ENCODE measurements at regions of chr9 and their contacts with region 1.

Region 1: DNA sequence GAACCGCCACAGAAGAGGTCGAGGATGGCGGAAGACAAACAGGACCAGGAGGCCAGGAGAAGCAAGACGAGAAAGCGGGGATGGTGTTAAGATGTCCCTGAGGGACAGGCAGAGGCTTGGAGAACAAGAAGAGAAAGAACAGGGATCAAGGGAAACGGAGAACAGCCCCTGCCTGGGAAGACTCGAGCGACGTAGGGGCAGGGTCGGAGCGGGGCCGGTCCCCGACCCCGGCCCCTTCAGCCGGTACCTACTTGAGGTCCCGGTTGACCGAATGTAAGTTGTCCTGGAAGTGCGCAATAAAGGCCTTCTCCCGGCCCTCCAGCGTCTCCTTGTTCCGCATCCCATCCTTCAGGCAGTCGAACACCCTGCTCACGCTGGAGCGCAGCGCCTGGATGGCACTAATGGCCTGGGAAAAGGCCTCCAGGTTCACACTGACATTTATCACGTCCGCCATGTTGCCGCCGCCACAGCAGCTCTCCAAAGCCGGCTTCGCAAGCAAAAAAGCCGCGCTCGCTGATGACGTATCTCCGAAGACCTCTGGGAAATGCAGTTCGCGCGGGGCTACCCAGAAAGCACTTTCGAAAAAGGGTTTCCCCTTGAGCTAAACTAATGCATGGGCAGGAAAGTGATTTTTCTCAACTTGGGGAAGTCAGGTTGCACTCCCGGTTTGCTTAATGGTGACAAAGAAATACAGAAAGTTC is at the start of gene MED27:
- DNase-seq: peak; percentile 90
- H3K4me3 Mint-ChIP-seq: peak within 1 kb of the TSS; percentile 98
- H3K27ac Mint-ChIP-seq: peak within 1 kb of the TSS; percentile 94
- H3K4me1 Mint-ChIP-seq: peaks cover 45% of the 10 kb centered on the region
- H3K27me3 Mint-ChIP-seq: peaks cover 8% of the 10 kb centered on the region
- total RNA-seq, gene MED27: 41.0 and 45.6 TPM in 2 replicates

Region 2: DNA sequence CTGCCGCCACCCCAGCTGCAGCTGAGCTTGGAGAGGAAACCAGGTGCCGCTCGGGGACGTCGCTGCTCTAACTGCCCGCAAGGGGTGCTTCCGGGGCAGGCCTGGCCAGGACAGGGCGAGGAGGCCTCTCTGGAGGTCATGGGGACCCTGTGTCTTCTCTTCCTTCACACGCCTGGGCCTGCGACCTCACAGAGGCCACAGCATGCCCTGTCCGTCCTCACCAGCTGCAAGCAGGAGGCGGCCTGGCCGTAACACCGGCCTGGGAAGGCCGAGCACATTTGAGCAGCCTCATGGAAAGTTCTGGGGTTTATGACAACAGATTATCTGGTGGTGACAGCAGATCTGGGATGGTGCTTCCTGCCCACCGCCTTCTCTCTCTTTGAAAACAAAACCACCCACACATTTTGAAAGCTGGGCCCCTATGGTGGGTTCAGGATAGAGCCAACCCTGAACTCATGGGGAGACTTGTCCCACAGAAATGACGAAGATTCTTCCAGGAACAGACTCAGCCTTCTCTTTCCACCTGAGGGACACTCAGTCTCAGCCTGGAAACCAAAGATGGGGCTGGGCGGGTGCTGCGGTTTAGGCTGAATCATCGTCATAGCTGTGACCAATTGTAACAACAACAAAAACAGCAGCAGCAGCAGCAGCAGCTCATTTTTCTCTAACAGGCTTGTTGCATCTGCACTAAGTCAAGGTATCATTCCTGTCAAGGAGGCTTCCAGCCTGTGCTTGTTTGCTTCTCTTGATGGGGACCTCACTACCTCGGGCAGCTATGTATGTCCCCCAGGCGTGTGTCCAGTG is 240.1 kb before region 1 on chr9:
- intact Hi-C with region 1: loop called (anchors 2 kb)
- DNase-seq: peak; percentile 71
- H3K4me3 Mint-ChIP-seq: peak overlapping the region; percentile 55
- H3K27ac Mint-ChIP-seq: peak overlapping the region; percentile 99
- H3K4me1 Mint-ChIP-seq: peaks cover 32% of the 10 kb centered on the region
- H3K27me3 Mint-ChIP-seq: no peaks in the 10 kb centered on the region

Region 3: GRCh38 chr9:132032238-132032950 is 47.1 kb before region 1 on chr9:
- intact Hi-C with region 1: no loop called
- DNase-seq: no peak
- H3K4me3 Mint-ChIP-seq: no peak overlapping the region
- H3K27ac Mint-ChIP-seq: no peak overlapping the region
- H3K4me1 Mint-ChIP-seq: peaks cover 25% of the 10 kb centered on the region
- H3K27me3 Mint-ChIP-seq: no peaks in the 10 kb centered on the region

Region 4: DNA sequence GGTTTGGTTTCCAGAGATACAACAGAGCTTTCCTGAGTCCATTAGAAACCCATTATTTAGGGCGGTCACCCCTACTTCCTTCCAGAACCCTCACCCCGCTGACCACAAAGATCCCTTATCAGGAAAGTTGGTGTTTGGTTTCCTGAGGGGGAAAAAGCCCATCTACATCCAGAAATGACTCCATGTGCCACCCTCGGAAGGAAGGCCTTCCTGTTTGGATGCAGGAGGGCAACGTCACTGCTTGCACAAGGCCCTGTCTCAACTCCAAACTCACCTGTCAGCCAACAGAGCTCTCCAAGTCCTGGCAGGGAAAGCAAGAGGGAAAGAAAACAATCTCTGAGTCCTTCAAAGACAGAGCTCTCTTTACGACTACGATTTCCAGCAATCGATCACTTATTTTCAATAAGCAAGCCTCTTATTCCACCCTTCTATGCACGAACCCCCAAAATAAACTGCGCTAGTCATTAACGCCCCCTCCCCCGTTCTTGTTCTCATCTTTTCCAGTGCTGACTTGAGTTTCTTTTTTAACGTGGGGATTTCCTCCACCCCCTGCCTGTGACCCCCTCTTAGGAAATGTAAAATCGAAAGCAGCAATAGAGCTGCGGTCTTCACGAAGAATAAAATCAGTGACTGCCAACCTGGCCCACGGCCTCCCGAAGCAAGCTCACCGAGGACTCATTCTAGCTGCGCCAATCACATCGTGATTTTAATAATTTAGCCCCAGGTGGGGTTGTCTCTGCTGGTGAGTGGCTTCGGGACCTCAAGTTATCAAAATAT is 46.6 kb after region 1 on chr9:
- intact Hi-C with region 1: loop called (anchors 1 kb)
- DNase-seq: no peak
- H3K4me3 Mint-ChIP-seq: peak overlapping the region; percentile 72
- H3K27ac Mint-ChIP-seq: peak overlapping the region; percentile 45
- H3K4me1 Mint-ChIP-seq: peaks cover 10% of the 10 kb centered on the region
- H3K27me3 Mint-ChIP-seq: peaks cover 31% of the 10 kb centered on the region

Region 5: GRCh38 chr9:132240753-132241493 is 161.4 kb after region 1 on chr9:
- intact Hi-C with region 1: loop called (anchors 1 kb)
- DNase-seq: peak; percentile 98
- H3K4me3 Mint-ChIP-seq: peak overlapping the region; percentile 94
- H3K27ac Mint-ChIP-seq: peak overlapping the region; percentile 78
- H3K4me1 Mint-ChIP-seq: peaks cover 15% of the 10 kb centered on the region
- H3K27me3 Mint-ChIP-seq: peaks cover 8% of the 10 kb centered on the region

Measured in activated T-helper 1 cell treated with anti-CD3 and anti-CD28 coated beads, Interleukin-12 subunit alpha, Interleukin-12 subunit beta, Interleukin-2, Interleukin-4 antibody, amounts not matched to agents 30 ng/mL and 10 ng/mL and 1 ng/mL, durations not matched to agents 14 hours and 24 hours and 36 hours (primary cell).